ENCODE measurements at regions of chr3 and their contacts with region 1.

Region 1: GRCh38 chr3:197820550-197821335 is 29.7 kb downstream of the LRCH3 start:
- DNase-seq: peak; percentile 95
- ATAC-seq: peak; percentile 96
- H3K4me3 ChIP-seq: peak overlapping the region; percentile 22 to 37 (median 24); a peak in 4 of 6 replicates
- H3K27ac ChIP-seq: peak overlapping the region; percentile 95
- H3K4me1 ChIP-seq: peaks cover 32% of the 10 kb centered on the region
- H3K27me3 ChIP-seq: no peaks in the 10 kb centered on the region
- CTCF ChIP-seq: no peak
- EP300 ChIP-seq: peak; percentile 44 to 80; a peak in 2 of 4 replicates
- POLR2A ChIP-seq: peak in 1 of 2 experiments; percentile 39; a peak in 1 of 4 replicates
- RAD21 ChIP-seq: peak; percentile 47; the same call in 1 of the 2 replicates

Region 2: GRCh38 chr3:197791113-197791891 is 29.4 kb before region 1 on chr3 and contains the start of gene LRCH3:
- CTCF ChIA-PET with region 1: no interaction called
- POLR2A ChIA-PET with region 1: interaction called, 15 read pairs
- in situ Hi-C with region 1: no loop called
- intact Hi-C with region 1: no loop called
- DNase-seq: peak; percentile 56
- ATAC-seq: peak; percentile 86
- H3K4me3 ChIP-seq: peak within 1 kb of the TSS; percentile 92 to 100 (median 96)
- H3K27ac ChIP-seq: peak within 1 kb of the TSS; percentile 93
- H3K4me1 ChIP-seq: peaks cover 52% of the 10 kb centered on the region
- H3K27me3 ChIP-seq: no peaks in the 10 kb centered on the region; a peak in 1 of 5 replicates
- CTCF ChIP-seq: no peak; the same call in none of the 2 replicates
- EP300 ChIP-seq: no peak
- POLR2A ChIP-seq: peak; percentile 93 to 99
- RAD21 ChIP-seq: no peak
- total RNA-seq, gene LRCH3: 25.5 and 37.8 TPM in 2 replicates

Region 3: GRCh38 chr3:197801891-197802778 is 18.6 kb before region 1 on chr3:
- CTCF ChIA-PET with region 1: no interaction called
- POLR2A ChIA-PET with region 1: no interaction called
- in situ Hi-C with region 1: no loop called
- intact Hi-C with region 1: loop called (anchors 2 kb)
- DNase-seq: no peak
- ATAC-seq: peak; percentile 37; the same call in 2 of the 3 replicates
- H3K4me3 ChIP-seq: no peak overlapping the region
- H3K27ac ChIP-seq: no peak overlapping the region
- H3K4me1 ChIP-seq: peaks cover 10% of the 10 kb centered on the region; the same call in 1 of the 2 replicates
- H3K27me3 ChIP-seq: no peaks in the 10 kb centered on the region; a peak in 1 of 5 replicates
- CTCF ChIP-seq: 0 out of 2 replicates have a peak, but pooled peaks have one; percentile 13
- EP300 ChIP-seq: no peak
- POLR2A ChIP-seq: no peak
- RAD21 ChIP-seq: no peak

Region 4: DNA sequence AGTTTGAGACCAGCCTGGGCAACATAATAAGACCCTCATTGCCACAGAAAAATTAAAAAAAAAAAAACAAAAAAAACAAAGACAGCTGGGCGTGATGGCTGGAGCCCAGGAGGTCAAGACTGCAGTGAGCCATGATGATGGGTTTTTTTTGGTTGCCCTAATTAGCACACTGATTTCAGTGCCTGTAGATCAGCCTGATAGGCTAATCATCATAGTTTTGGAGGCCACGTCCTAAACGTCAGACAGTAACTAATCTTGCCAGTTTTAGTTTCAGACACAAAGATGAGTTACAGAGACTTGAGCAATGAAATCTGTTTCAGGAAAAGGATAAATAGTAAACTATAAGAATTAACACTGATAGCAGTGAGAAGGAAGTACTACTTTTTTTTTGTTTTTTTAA is 25.7 kb after region 1 on chr3:
- CTCF ChIA-PET with region 1: no interaction called
- POLR2A ChIA-PET with region 1: no interaction called
- in situ Hi-C with region 1: no loop called
- intact Hi-C with region 1: no loop called
- DNase-seq: no peak
- ATAC-seq: no peak
- H3K4me3 ChIP-seq: no peak overlapping the region
- H3K27ac ChIP-seq: no peak overlapping the region
- H3K4me1 ChIP-seq: no peaks in the 10 kb centered on the region
- H3K27me3 ChIP-seq: no peaks in the 10 kb centered on the region
- CTCF ChIP-seq: no peak
- EP300 ChIP-seq: no peak
- POLR2A ChIP-seq: no peak
- RAD21 ChIP-seq: no peak

Measured in HepG2 (cell line).